Natural killer cell (primary cell): ENCODE measurements at regions of chr19 and their contacts with region 1.

Region 1: DNA sequence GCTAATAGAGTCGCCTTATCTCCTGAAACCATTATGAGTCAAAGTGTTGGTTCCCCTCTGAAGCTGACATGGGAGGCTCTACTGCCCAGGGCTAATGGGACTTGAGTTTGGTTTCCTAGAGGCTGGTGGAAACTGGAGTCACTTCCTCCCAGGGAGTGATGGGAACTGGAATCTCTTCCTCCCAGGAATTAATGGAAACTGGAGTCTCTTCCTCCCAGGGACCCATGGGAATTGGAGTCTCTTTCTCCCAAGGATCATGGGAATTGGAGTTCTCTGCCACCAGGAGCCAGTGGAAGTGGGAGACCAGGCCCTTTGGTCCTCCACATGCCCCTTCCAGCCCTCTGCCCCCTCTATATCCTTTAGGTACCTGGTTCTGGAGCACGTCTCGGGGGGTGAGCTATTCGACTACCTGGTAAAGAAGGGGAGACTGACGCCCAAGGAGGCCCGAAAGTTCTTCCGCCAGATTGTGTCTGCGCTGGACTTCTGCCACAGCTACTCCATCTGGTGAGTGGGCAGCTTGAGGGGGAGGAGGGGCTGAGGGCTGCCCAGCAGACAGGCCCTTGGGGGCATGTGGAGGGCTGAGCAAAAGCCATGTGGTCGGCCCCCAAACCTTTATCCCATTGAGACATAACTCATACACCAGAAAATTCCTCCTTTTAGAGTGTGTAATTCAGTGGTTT is 5.5 kb downstream of the BRSK1 start:
- DNase-seq: no peak
- ATAC-seq: no peak
- H3K4me3 ChIP-seq: no peak overlapping the region
- H3K4me3 Mint-ChIP-seq: no peak overlapping the region
- H3K27ac ChIP-seq: no peak overlapping the region
- H3K27ac Mint-ChIP-seq: no peak overlapping the region
- H3K4me1 ChIP-seq: peaks cover 5% of the 10 kb centered on the region
- H3K4me1 Mint-ChIP-seq: peaks cover 5 to 6% of the 10 kb centered on the region in 2 donors
- H3K27me3 ChIP-seq: no peaks in the 10 kb centered on the region
- H3K27me3 Mint-ChIP-seq: no peaks in the 10 kb centered on the region
- CTCF ChIP-seq: no peak

Region 2: DNA sequence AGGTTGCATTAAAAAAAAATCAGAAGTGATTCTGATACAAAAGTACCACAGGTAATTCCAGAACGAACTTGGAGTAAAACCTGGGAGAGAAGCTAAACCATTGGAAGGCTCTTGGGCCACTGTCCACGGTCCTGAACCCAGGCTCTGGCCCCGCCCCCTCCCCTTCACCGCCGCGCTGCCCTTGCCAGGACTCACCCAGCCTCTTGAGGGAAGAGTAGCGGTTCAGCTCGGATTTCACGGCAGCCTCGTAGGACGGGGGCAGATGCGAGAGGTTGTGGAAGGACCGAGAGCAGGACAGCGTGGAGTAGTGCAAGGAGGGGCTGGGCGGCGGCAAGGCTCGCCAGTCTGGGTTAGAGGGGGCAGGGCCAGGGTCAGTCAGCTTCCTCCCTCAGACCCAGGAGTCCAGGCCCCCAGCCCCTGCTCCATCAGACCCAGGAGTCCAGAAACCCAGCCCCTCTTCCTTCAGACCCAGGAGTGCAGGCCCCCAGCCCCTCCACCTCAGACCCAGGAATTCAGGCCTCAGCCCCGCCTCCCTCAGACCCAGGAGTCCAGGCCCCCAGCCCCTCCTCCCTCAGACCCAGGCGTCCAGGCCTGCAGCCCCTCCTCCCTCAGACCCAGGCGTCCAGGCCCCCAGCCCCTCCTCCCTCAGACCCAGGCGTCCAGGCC is 148.3 kb after region 1 on chr19:
- intact Hi-C with region 1: no loop called
- DNase-seq: peak in 1 of 2 donors; percentile 49
- ATAC-seq: peak in 2 of 3 donors; percentile 53 to 60
- H3K4me3 ChIP-seq: no peak overlapping the region
- H3K4me3 Mint-ChIP-seq: no peak overlapping the region
- H3K27ac ChIP-seq: no peak overlapping the region
- H3K27ac Mint-ChIP-seq: no peak overlapping the region
- H3K4me1 ChIP-seq: peaks cover 22% of the 10 kb centered on the region
- H3K4me1 Mint-ChIP-seq: peaks cover 11 to 25% of the 10 kb centered on the region in 2 donors
- H3K27me3 ChIP-seq: peaks cover 37% of the 10 kb centered on the region
- H3K27me3 Mint-ChIP-seq: peaks cover 36 to 46% of the 10 kb centered on the region in 2 donors
- CTCF ChIP-seq: no peak

Region 3: DNA sequence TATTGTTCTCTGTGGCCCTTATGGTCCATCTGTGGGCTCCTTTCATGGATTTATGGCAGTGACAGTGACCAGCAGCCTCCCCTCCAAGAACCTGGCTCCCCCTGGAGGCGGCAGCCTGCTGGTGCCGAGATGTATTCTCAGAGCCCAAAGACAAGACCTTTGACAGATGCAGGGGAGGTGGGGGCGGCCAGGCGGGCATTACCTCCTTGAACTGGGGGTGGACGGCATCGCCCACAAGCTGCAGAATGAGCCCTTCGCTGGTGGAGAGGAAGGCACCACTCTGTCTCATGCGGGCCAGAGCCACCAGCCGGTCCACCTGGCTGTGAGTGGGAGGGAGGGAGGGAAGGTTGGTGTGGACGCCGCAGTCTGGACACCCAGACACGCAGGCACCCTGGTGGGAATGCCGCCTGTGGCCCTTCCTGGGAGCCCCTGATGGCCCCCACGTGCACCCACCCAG is 165.6 kb after region 1 on chr19:
- intact Hi-C with region 1: loop called (anchors 2 kb)
- DNase-seq: peak in 1 of 2 donors; percentile 69
- ATAC-seq: peak in 1 of 3 donors; percentile 55
- H3K4me3 ChIP-seq: no peak overlapping the region
- H3K4me3 Mint-ChIP-seq: no peak overlapping the region
- H3K27ac ChIP-seq: no peak overlapping the region
- H3K27ac Mint-ChIP-seq: no peak overlapping the region
- H3K4me1 ChIP-seq: peaks cover 12% of the 10 kb centered on the region
- H3K4me1 Mint-ChIP-seq: peaks cover under 1 to 17% of the 10 kb centered on the region in 2 donors
- H3K27me3 ChIP-seq: peaks cover 20% of the 10 kb centered on the region
- H3K27me3 Mint-ChIP-seq: peaks cover 8 to 26% of the 10 kb centered on the region in 2 donors
- CTCF ChIP-seq: peak; percentile 40

Region 4: DNA sequence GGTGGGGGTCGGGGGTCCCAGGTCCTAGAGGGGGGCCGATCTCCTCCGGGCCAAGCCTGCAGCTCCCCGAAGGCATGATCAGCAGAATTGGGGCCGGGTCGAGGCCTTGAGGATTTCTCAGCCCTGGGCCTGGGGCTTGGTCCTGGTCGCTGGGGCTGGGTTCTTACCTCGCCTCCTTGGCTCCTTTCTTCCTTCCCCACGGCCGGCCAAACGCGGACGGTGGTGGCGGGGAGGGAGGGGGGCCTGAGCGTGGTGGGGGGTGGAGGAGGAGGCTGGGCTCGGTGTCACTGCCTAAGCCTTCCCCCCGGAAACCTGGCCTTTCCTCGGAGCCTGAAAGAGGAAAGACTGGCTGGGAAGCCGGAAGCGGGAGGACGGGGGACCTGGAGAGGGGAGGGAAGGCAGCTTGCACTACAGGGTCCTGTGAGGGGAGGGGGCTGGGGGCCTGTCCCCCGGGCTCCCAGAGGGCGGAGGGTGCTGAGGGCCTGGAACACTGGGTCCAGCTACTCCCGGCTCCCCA is 291.4 kb after region 1 on chr19 and contains the start of gene ZNF579:
- intact Hi-C with region 1: no loop called
- DNase-seq: peak; percentile 71 to 85
- ATAC-seq: peak; percentile 78 to 84 (median 79)
- H3K4me3 ChIP-seq: peak within 1 kb of the TSS; percentile 68
- H3K4me3 Mint-ChIP-seq: peak within 1 kb of the TSS; percentile 83
- H3K27ac ChIP-seq: peak within 1 kb of the TSS; percentile 78
- H3K27ac Mint-ChIP-seq: peak within 1 kb of the TSS; percentile 43 to 82
- H3K4me1 ChIP-seq: peaks cover 20% of the 10 kb centered on the region
- H3K4me1 Mint-ChIP-seq: peaks cover 25 to 27% of the 10 kb centered on the region in 2 donors
- H3K27me3 ChIP-seq: no peaks in the 10 kb centered on the region
- H3K27me3 Mint-ChIP-seq: peaks cover 9 to 15% of the 10 kb centered on the region in 2 donors
- CTCF ChIP-seq: no peak
- total RNA-seq, gene ZNF579: 8.3 to 11.2 (median 9.5) TPM